Aorta (tissue), 5 donors: ENCODE measurements at regions of chr4 and their contacts with region 1.

Region 1: GRCh38 chr4:79042079-79042674 is 102.9 kb upstream of the PAQR3 start:
- DNase-seq: no peak
- ATAC-seq: no peak
- H3K4me3 ChIP-seq: no peak overlapping the region
- H3K27ac ChIP-seq: no peak overlapping the region
- H3K4me1 ChIP-seq: no peaks in the 10 kb centered on the region
- H3K27me3 ChIP-seq: no peaks in the 10 kb centered on the region

Region 2: GRCh38 chr4:79065262-79065661 is 23.1 kb after region 1 on chr4:
- intact Hi-C with region 1: no loop called
- DNase-seq: no peak
- ATAC-seq: no peak
- H3K4me3 ChIP-seq: no peak overlapping the region
- H3K27ac ChIP-seq: no peak overlapping the region
- H3K4me1 ChIP-seq: peaks cover 0 to 2% of the 10 kb centered on the region in 2 donors
- H3K27me3 ChIP-seq: no peaks in the 10 kb centered on the region

Region 3: GRCh38 chr4:79198951-79199587 is 156.9 kb after region 1 on chr4:
- intact Hi-C with region 1: no loop called
- DNase-seq: no peak
- ATAC-seq: no peak
- H3K4me3 ChIP-seq: no peak overlapping the region
- H3K27ac ChIP-seq: no peak overlapping the region
- H3K4me1 ChIP-seq: peaks cover 0 to 2% of the 10 kb centered on the region in 2 donors
- H3K27me3 ChIP-seq: no peaks in the 10 kb centered on the region

Region 4: DNA sequence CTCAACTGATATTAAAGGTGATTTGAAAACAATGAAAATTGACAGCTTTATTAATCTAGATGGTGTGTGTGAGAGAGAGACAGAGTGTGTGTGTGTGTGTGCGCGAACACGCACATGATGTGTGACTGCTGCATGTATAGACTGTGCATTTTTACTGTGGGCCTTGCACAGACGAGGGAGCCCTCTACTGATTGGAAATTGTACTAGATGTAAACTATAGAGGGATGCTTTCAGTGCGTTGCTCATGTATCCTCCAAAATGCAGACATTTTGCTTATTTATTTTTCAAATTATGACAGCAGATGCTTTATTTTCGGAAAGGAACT is 534.2 kb after region 1 on chr4:
- intact Hi-C with region 1: loop called in 1 of 2 experiments (anchors 5 kb)
- DNase-seq: no peak
- ATAC-seq: peak; percentile 59
- H3K4me3 ChIP-seq: no peak overlapping the region
- H3K27ac ChIP-seq: no peak overlapping the region
- H3K4me1 ChIP-seq: peaks cover 0 to 7% of the 10 kb centered on the region in 2 donors
- H3K27me3 ChIP-seq: no peaks in the 10 kb centered on the region

Region 5: GRCh38 chr4:80215449-80216052 is 1173.4 kb after region 1 on chr4:
- intact Hi-C with region 1: loop called (anchors 5 kb)
- DNase-seq: no peak
- ATAC-seq: no peak
- H3K4me3 ChIP-seq: no peak overlapping the region
- H3K27ac ChIP-seq: no peak overlapping the region
- H3K4me1 ChIP-seq: no peaks in the 10 kb centered on the region
- H3K27me3 ChIP-seq: no peaks in the 10 kb centered on the region